ENCODE measurements at regions of chr19 and their contacts with region 1.

Region 1: GRCh38 chr19:5078182-5078581 is 109.3 kb downstream of the KDM4B start:
- DNase-seq: no peak
- H3K4me3 ChIP-seq: no peak overlapping the region
- H3K27ac ChIP-seq: no peak overlapping the region
- H3K4me1 ChIP-seq: no peaks in the 10 kb centered on the region
- H3K27me3 ChIP-seq: no peaks in the 10 kb centered on the region
- CTCF ChIP-seq: no peak

Region 2: DNA sequence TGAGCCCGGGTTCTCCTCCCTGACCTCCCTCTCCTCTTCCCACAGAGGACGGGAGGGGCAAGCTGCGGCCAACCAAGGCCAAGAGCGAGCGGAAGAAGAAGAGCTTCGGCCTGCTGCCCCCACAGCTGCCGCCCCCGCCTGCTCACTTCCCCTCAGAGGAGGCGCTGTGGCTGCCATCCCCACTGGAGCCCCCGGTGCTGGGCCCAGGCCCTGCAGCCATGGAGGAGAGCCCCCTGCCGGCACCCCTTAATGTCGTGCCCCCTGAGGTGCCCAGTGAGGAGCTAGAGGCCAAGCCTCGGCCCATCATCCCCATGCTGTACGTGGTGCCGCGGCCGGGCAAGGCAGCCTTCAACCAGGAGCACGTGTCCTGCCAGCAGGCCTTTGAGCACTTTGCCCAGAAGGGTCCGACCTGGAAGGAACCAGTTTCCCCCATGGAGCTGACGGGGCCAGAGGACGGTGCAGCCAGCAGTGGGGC is 52.9 kb after region 1 on chr19:
- CTCF ChIA-PET with region 1: no interaction called
- dilution Hi-C with region 1: loop called (anchors 5 kb)
- in situ Hi-C with region 1: no loop called
- intact Hi-C with region 1: no loop called
- DNase-seq: no peak
- H3K4me3 ChIP-seq: no peak overlapping the region
- H3K27ac ChIP-seq: no peak overlapping the region
- H3K4me1 ChIP-seq: no peaks in the 10 kb centered on the region
- H3K27me3 ChIP-seq: no peaks in the 10 kb centered on the region
- CTCF ChIP-seq: no peak

Region 3: DNA sequence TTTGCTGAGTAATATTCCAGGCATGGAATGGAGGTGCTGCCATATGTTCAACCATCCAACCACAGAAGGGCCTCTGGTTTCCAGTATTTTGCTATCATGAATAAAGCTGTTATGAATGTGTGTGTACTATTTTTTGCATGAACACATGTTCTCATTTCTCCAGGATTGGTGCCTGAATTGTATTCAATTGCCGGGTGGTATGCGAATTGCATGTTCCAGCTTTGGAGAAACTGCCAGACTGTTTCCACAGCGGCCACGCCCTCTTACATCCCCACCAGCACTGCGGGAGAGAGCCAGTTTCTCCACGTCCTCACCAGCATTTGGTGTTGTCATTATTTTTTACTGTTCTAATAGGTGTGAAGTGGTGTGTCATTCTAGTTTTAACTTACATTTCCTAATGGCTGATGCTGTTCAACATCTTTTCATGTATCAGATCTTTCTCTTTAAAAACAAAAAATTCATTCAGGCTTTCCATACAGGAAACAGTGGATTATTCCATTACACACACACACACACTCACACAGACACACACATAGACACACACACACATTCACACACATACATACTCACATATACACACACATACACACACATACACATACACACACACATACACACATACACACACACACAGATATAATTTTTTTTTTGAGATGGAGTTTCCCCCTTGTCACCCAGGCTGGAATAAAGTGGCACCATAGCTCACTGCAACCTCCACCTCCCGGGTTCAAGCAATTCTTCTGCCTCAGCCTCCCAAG is 108.3 kb after region 1 on chr19:
- CTCF ChIA-PET with region 1: no interaction called
- dilution Hi-C with region 1: no loop called
- in situ Hi-C with region 1: no loop called
- intact Hi-C with region 1: no loop called
- DNase-seq: peak; percentile 15
- H3K4me3 ChIP-seq: no peak overlapping the region
- H3K27ac ChIP-seq: no peak overlapping the region
- H3K4me1 ChIP-seq: no peaks in the 10 kb centered on the region
- H3K27me3 ChIP-seq: no peaks in the 10 kb centered on the region
- CTCF ChIP-seq: no peak